CD4-positive, alpha-beta memory T cell (primary cell): ENCODE measurements at regions of chr19 and their contacts with region 1.

Region 1: GRCh38 chr19:39125554-39126311 is at the start of gene PAK4:
- DNase-seq: peak; percentile 94 to 96 (median 95)
- H3K4me3 ChIP-seq: peak within 1 kb of the TSS; percentile 73 to 82
- H3K4me3 Mint-ChIP-seq: peak within 1 kb of the TSS; percentile 95 to 99 (median 98)
- H3K27ac ChIP-seq: peak within 1 kb of the TSS; percentile 76
- H3K27ac Mint-ChIP-seq: peak within 1 kb of the TSS; percentile 95 to 100 (median 99)
- H3K4me1 ChIP-seq: peaks cover 26% of the 10 kb centered on the region
- H3K4me1 Mint-ChIP-seq: peaks cover 23 to 65% (median 42%) of the 10 kb centered on the region in 4 donors
- H3K27me3 ChIP-seq: no peaks in the 10 kb centered on the region
- H3K27me3 Mint-ChIP-seq: peaks cover 3% of the 10 kb centered on the region in 2 donors
- total RNA-seq, gene PAK4: 13.1 to 15.7 TPM

Region 2: DNA sequence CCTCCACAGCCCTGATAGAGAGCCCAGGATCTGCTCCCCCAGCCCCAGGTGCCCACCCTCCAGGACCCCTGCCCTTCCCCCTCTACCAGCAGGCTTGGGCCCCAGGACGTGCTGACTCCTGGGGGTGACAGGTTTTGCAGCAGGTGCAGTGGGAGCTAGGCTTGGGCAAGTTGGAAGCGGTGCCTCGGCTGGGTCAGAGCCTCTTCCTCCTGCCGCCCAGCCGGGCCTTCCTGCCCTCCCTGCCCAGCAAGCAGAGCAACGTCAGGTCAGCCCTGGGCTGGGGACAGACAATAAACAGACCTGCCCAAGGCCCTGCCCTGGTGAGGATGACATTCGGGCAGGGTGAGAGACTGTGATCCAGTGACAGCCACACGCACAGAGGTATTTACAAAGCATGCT is 61.8 kb after region 1 on chr19:
- CTCF ChIA-PET with region 1: interaction called, 8 read pairs
- POLR2A ChIA-PET with region 1: no interaction called
- intact Hi-C with region 1: loop called (anchors 1 kb)
- DNase-seq: no peak
- H3K4me3 ChIP-seq: no peak overlapping the region
- H3K4me3 Mint-ChIP-seq: no peak overlapping the region
- H3K27ac ChIP-seq: no peak overlapping the region
- H3K27ac Mint-ChIP-seq: no peak overlapping the region
- H3K4me1 ChIP-seq: no peaks in the 10 kb centered on the region
- H3K4me1 Mint-ChIP-seq: peaks cover 0 to 4% (median 2%) of the 10 kb centered on the region in 4 donors
- H3K27me3 ChIP-seq: peaks cover 3% of the 10 kb centered on the region
- H3K27me3 Mint-ChIP-seq: peaks cover 8 to 10% of the 10 kb centered on the region in 2 donors

Region 3: DNA sequence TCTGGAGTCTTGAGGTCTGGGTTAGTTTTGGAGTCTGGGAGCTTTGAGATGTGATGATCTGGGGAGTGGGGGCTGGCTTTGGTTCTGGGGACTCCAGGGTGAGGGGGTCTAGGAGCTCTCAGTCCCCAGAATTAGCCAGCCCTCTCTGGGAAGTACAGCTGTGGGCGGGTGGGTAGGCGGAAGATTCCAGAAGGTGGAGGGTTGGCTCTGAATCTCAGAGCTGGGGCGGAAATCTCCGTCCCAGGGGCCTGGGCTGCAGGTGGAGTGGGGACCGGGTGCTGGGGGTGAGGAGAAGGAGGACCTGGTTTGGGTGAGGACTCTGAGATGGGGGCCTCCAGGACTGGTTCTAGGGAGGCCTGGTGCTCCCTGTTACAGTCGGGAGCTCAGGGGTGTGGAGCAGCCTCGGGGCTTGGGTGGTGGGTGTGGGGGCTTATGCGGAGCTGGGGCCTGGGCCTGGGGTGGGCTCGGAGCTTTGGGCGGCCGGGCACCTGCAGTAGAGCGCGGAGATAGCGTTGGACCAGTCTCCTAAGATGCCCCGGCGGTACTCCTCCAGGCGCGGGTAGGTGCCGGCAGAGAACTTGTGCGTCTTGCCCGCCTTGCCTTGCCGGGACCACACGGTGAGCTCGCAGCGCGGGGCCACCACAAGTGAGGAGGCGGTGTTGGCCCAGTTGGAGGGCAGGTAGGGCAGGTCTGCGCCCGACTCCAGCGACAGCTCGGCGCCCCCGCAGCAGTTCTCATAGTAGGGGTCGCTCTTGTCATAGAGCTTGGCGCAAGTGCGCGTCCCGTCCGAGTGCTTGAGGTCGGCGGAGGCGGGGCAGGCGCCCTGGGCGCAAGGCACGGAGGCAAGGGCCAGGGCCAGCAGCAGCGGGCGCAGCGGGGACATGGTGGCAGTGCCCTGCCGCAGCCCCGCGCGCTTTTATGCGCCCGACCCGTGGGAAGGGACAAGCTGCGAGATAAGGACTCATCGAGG is 77.9 kb after region 1 on chr19 and contains the start of gene SYCN:
- CTCF ChIA-PET with region 1: no interaction called
- POLR2A ChIA-PET with region 1: no interaction called
- intact Hi-C with region 1: no loop called
- DNase-seq: no peak
- H3K4me3 ChIP-seq: no peak within 1 kb of the TSS
- H3K4me3 Mint-ChIP-seq: peak within 1 kb of the TSS in 1 of 8 donors; percentile 20
- H3K27ac ChIP-seq: no peak within 1 kb of the TSS
- H3K27ac Mint-ChIP-seq: no peak within 1 kb of the TSS
- H3K4me1 ChIP-seq: no peaks in the 10 kb centered on the region
- H3K4me1 Mint-ChIP-seq: peaks cover 0 to 4% (median 0%) of the 10 kb centered on the region in 4 donors
- H3K27me3 ChIP-seq: peaks cover 6% of the 10 kb centered on the region
- H3K27me3 Mint-ChIP-seq: peaks cover 35% of the 10 kb centered on the region in 2 donors
- total RNA-seq, gene SYCN: not detected

Region 4: GRCh38 chr19:39341719-39342604 is 216.2 kb after region 1 on chr19 and contains the start of gene SAMD4B:
- CTCF ChIA-PET with region 1: no interaction called
- POLR2A ChIA-PET with region 1: no interaction called
- intact Hi-C with region 1: loop called (anchors 1 kb)
- DNase-seq: peak; percentile 99 to 100 (median 99)
- H3K4me3 ChIP-seq: peak within 1 kb of the TSS; percentile 86 to 91
- H3K4me3 Mint-ChIP-seq: peak within 1 kb of the TSS; percentile 87 to 99 (median 94)
- H3K27ac ChIP-seq: peak within 1 kb of the TSS; percentile 78
- H3K27ac Mint-ChIP-seq: peak within 1 kb of the TSS; percentile 91 to 98 (median 95)
- H3K4me1 ChIP-seq: peaks cover 64% of the 10 kb centered on the region
- H3K4me1 Mint-ChIP-seq: peaks cover 50 to 77% (median 64%) of the 10 kb centered on the region in 4 donors
- H3K27me3 ChIP-seq: no peaks in the 10 kb centered on the region
- H3K27me3 Mint-ChIP-seq: no peaks in the 10 kb centered on the region
- total RNA-seq, gene SAMD4B: 65.0 to 79.6 TPM

Region 5: GRCh38 chr19:39412100-39412866 is 286.6 kb after region 1 on chr19 and contains the start of gene PLEKHG2:
- CTCF ChIA-PET with region 1: interaction called, 4 read pairs
- POLR2A ChIA-PET with region 1: interaction called, 8 read pairs
- intact Hi-C with region 1: loop called (anchors 1 kb)
- DNase-seq: peak; percentile 97 to 99 (median 98)
- H3K4me3 ChIP-seq: peak within 1 kb of the TSS; percentile 69 to 74
- H3K4me3 Mint-ChIP-seq: peak within 1 kb of the TSS; percentile 76 to 98 (median 90)
- H3K27ac ChIP-seq: peak within 1 kb of the TSS; percentile 100
- H3K27ac Mint-ChIP-seq: peak within 1 kb of the TSS; percentile 94 to 100 (median 99)
- H3K4me1 ChIP-seq: peaks cover 32% of the 10 kb centered on the region
- H3K4me1 Mint-ChIP-seq: peaks cover 25 to 60% (median 34%) of the 10 kb centered on the region in 4 donors
- H3K27me3 ChIP-seq: no peaks in the 10 kb centered on the region
- H3K27me3 Mint-ChIP-seq: peaks cover 0 to 7% of the 10 kb centered on the region in 2 donors
- total RNA-seq, gene PLEKHG2: 12.1 to 17.0 TPM